ENCODE measurements at regions of chr1 and their contacts with region 1.

Region 1: DNA sequence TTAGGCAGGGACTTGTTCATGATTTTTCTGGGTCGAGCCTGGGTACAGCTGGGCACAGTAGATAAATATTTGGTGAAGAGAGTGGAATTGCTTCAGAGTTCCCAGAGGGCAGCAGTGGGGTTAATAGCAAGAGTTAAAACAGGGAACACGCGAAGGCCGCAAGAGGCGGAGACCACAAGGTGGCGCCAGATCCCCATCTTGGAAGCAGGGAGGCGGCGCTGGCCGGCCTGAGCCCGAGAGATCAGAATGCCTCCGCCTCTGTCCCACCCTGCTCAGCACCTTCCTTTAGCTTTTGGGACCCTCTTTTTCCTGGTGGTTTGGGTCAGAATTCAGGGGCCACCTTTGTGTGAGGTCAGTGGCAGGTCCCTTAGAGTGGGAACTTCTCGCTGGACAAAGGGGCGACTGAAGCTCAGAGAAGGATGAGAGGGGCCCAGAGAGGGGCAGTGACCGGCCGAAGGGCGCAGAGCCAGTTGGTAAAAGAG is 6.5 kb upstream of the PADI2 start:
- DNase-seq: peak; percentile 77 to 95 (median 91)
- H3K4me3 ChIP-seq: no peak overlapping the region
- H3K27ac ChIP-seq: no peak overlapping the region
- H3K4me1 ChIP-seq: peaks cover 3 to 21% of the 10 kb centered on the region in 2 donors
- H3K27me3 ChIP-seq: no peaks in the 10 kb centered on the region
- CTCF ChIP-seq: peak; percentile 90 to 98 (median 95)
- POLR2A ChIP-seq: no peak

Region 2: GRCh38 chr1:16946646-16947045 is 179.2 kb before region 1 on chr1:
- intact Hi-C with region 1: no loop called
- DNase-seq: no peak
- H3K4me3 ChIP-seq: no peak overlapping the region
- H3K27ac ChIP-seq: no peak overlapping the region
- H3K4me1 ChIP-seq: no peaks in the 10 kb centered on the region
- H3K27me3 ChIP-seq: no peaks in the 10 kb centered on the region
- CTCF ChIP-seq: no peak
- POLR2A ChIP-seq: no peak

Region 3: GRCh38 chr1:17405898-17406759 is 280.3 kb after region 1 on chr1:
- intact Hi-C with region 1: loop called in 1 of 2 experiments (anchors 10 kb)
- DNase-seq: peak; percentile 51 to 76 (median 60)
- H3K4me3 ChIP-seq: no peak overlapping the region
- H3K27ac ChIP-seq: no peak overlapping the region
- H3K4me1 ChIP-seq: no peaks in the 10 kb centered on the region
- H3K27me3 ChIP-seq: no peaks in the 10 kb centered on the region
- CTCF ChIP-seq: peak; percentile 45 to 67 (median 56)
- POLR2A ChIP-seq: no peak

Measured in adrenal gland (tissue), 19 donors.